ENCODE measurements at regions of chr1 and their contacts with region 1.

Region 1: GRCh38 chr1:221689138-221689537 is 52.8 kb downstream of the DUSP10 start:
- DNase-seq: peak in 1 of 2 donors; percentile 53
- ATAC-seq: peak; percentile 78 to 81 (median 79)
- H3K4me3 ChIP-seq: no peak overlapping the region
- H3K4me3 Mint-ChIP-seq: peak overlapping the region; percentile 74
- H3K27ac ChIP-seq: peak overlapping the region; percentile 71
- H3K27ac Mint-ChIP-seq: peak overlapping the region; percentile 84 to 89
- H3K4me1 ChIP-seq: peaks cover 21% of the 10 kb centered on the region
- H3K4me1 Mint-ChIP-seq: peaks cover 18 to 27% of the 10 kb centered on the region in 2 donors
- H3K27me3 ChIP-seq: no peaks in the 10 kb centered on the region
- H3K27me3 Mint-ChIP-seq: no peaks in the 10 kb centered on the region
- CTCF ChIP-seq: no peak

Region 2: GRCh38 chr1:221187174-221187573 is 502.0 kb before region 1 on chr1:
- intact Hi-C with region 1: no loop called
- DNase-seq: no peak
- ATAC-seq: no peak
- H3K4me3 ChIP-seq: no peak overlapping the region
- H3K4me3 Mint-ChIP-seq: no peak overlapping the region
- H3K27ac ChIP-seq: no peak overlapping the region
- H3K27ac Mint-ChIP-seq: no peak overlapping the region
- H3K4me1 ChIP-seq: no peaks in the 10 kb centered on the region
- H3K4me1 Mint-ChIP-seq: no peaks in the 10 kb centered on the region
- H3K27me3 ChIP-seq: no peaks in the 10 kb centered on the region
- H3K27me3 Mint-ChIP-seq: peaks cover 6 to 8% of the 10 kb centered on the region in 2 donors
- CTCF ChIP-seq: no peak

Region 3: GRCh38 chr1:221648201-221648600 is 40.9 kb before region 1 on chr1:
- intact Hi-C with region 1: loop called (anchors 5 kb)
- DNase-seq: no peak
- ATAC-seq: no peak
- H3K4me3 ChIP-seq: no peak overlapping the region
- H3K4me3 Mint-ChIP-seq: no peak overlapping the region
- H3K27ac ChIP-seq: no peak overlapping the region
- H3K27ac Mint-ChIP-seq: no peak overlapping the region
- H3K4me1 ChIP-seq: no peaks in the 10 kb centered on the region
- H3K4me1 Mint-ChIP-seq: no peaks in the 10 kb centered on the region
- H3K27me3 ChIP-seq: no peaks in the 10 kb centered on the region
- H3K27me3 Mint-ChIP-seq: no peaks in the 10 kb centered on the region
- CTCF ChIP-seq: no peak

Measured in natural killer cell (primary cell).